SK-N-SH (cell line): ENCODE measurements at regions of chr2 and their contacts with region 1.

Region 1: GRCh38 chr2:120343433-120344105 is 2.4 kb upstream of the INHBB start:
- DNase-seq: peak; percentile 92
- H3K4me3 ChIP-seq: peak overlapping the region in 1 of 2 experiments; percentile 46; a peak in 2 of 4 replicates
- H3K27ac ChIP-seq: no peak overlapping the region
- H3K4me1 ChIP-seq: peaks cover 0 to 14% of the 10 kb centered on the region in 2 experiments; a peak in 1 of 4 replicates
- H3K27me3 ChIP-seq: peaks cover 64% of the 10 kb centered on the region
- CTCF ChIP-seq: peak; percentile 70
- EP300 ChIP-seq: no peak
- RAD21 ChIP-seq: peak; percentile 88

Region 2: DNA sequence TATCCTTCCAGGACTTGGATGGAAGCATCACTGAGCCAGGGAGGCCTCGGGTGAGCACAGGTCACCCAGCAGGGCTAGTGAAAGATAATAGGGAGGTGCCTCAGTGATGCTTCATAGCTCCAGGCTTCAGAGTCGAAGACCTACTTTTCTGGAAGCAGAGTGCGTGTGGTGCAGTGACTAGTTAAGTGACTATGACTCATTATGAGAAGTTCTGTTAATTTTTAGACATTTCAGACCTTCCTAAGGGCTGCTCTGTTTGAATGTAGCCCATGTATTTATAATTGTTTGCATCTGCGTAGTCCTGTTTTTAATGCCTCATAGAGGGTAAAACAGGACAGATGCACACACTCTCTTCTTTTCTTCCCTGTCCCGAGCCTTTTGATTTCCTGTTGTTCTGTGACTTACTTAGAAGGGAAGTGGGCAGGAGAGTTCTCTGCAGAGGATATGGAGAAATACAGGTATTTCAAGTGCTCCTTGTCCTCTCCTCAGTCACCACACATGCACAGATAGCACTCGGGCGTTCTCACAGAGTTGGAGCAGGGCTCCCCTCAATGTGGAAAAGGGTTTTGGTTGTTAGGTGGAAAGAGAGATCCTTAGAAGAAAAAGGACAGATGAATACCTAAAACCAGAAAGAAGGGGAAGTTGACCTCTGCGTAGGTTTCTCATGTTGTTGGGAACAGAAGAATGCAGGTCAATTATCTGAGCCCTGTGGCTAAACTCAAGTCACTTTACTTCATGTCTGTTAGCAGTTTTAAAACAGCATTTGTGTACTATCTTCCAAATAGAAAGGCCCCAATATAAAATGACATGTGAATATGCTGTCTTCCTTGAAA is 56.2 kb before region 1 on chr2:
- CTCF ChIA-PET with region 1: no interaction called
- POLR2A ChIA-PET with region 1: no interaction called
- DNase-seq: no peak
- H3K4me3 ChIP-seq: no peak overlapping the region
- H3K27ac ChIP-seq: peak overlapping the region in 1 of 2 experiments; percentile 61; a peak in 3 of 4 replicates
- H3K4me1 ChIP-seq: peaks cover 8 to 18% of the 10 kb centered on the region in 2 experiments; a peak in 3 of 4 replicates
- H3K27me3 ChIP-seq: no peaks in the 10 kb centered on the region
- CTCF ChIP-seq: no peak
- EP300 ChIP-seq: no peak
- RAD21 ChIP-seq: no peak

Region 3: DNA sequence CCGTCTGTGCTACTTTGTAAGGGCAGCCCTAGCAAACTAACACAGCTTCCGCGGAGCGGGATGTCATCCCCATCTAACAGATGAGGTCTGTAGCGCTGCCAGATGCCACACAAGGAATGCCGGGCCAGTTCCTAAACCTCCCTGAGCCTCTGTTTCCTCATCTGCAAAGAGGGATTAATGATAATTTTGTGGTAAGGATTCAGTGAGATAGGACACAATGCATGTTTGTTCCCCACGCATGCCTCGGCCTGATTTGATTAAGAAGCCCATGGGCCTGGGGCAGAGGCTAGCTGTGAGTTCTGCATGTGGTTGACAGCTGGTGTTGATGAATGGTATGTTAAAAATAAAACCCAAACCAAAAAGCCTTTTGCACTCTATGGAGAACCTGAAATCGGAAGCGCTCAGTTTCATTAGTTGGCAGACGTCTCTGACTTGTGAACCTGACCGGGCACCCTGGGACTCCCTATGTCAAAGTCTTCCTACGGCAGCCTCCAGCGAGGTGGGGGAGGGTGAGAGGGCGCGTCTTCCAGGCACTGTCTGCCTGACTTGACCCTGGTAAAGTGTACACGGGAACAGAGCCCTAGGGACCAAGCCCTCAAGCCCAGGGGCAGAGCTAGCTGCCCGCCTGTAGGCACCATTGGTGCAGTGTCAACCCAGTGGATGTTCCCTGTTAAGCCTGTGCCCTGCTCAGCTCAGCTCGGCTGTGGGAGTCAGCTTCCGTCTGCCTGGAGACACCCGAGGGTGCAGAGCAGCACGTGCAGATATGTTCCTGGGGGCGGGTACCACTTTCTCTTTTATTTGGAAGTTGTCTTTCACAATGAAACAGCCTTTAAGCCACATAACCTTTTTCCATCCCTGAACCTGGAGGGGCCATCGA is 12.4 kb before region 1 on chr2:
- CTCF ChIA-PET with region 1: interaction called, 41 read pairs
- POLR2A ChIA-PET with region 1: no interaction called
- DNase-seq: no peak
- H3K4me3 ChIP-seq: no peak overlapping the region
- H3K27ac ChIP-seq: no peak overlapping the region
- H3K4me1 ChIP-seq: peaks cover 0 to 10% of the 10 kb centered on the region in 2 experiments; a peak in 1 of 4 replicates
- H3K27me3 ChIP-seq: peaks cover 27% of the 10 kb centered on the region; the same call in 1 of the 2 replicates
- CTCF ChIP-seq: no peak
- EP300 ChIP-seq: no peak
- RAD21 ChIP-seq: no peak

Region 4: GRCh38 chr2:120453635-120453998 is 110.0 kb after region 1 on chr2:
- CTCF ChIA-PET with region 1: no interaction called
- POLR2A ChIA-PET with region 1: no interaction called
- DNase-seq: no peak
- H3K4me3 ChIP-seq: no peak overlapping the region
- H3K27ac ChIP-seq: no peak overlapping the region
- H3K4me1 ChIP-seq: 0 out of 4 replicates have a peak, but pooled peaks cover 0 to 5% of the 10 kb centered on the region in 2 experiments
- H3K27me3 ChIP-seq: no peaks in the 10 kb centered on the region
- CTCF ChIP-seq: no peak
- EP300 ChIP-seq: no peak
- RAD21 ChIP-seq: no peak

Region 5: DNA sequence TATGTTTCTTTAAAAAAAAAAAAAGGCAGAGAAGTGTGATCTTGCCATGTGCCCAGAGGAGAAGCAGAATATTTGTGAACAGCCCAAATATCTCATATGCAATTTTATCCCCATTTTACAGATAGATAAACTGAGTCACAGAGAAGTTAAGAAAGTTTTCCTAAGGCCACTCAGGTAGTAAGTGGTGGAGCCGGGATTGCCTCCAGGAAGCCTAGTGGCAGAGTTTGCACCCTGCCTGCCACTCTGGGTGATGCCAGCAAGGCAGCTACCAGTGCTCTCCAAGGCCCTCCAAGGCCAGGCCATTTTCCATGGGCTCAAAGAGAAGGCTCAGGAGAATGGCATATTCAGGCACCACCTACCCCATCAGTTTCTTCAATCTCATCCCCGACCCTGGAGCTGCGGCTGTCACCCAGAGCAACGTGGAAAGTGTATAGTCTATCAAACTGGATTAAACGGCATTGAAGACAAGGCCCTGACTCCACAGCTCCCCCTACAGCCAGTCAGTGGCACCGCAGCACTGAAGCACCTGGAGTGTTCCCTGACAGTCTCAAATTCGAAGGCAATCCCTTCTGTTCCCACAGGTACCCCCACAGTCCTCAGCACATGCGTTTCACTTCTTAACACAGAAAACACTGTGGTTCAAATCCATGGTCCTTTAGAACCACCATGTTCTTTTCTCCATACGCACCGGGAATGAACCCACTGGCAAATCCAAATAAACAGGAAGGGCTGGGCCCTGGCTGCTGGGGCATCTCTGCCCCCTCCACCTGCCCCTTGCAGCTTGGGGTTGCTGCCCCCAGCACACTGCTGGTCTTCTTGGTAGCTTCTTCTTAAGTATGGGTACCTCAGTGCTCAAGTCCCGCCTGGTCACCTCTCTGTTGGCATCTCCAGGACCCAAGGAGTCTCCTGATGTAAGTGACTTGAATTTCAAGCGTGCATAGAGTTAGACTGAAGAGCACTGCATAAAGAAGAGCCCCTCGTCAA is 177.7 kb after region 1 on chr2:
- CTCF ChIA-PET with region 1: interaction called, 10 read pairs
- POLR2A ChIA-PET with region 1: no interaction called
- DNase-seq: peak; percentile 65
- H3K4me3 ChIP-seq: no peak overlapping the region; a peak in 1 of 4 replicates
- H3K27ac ChIP-seq: no peak overlapping the region
- H3K4me1 ChIP-seq: no peaks in the 10 kb centered on the region; a peak in 1 of 4 replicates
- H3K27me3 ChIP-seq: peaks cover 40% of the 10 kb centered on the region
- CTCF ChIP-seq: peak; percentile 73
- EP300 ChIP-seq: no peak
- RAD21 ChIP-seq: peak; percentile 58

Region 6: GRCh38 chr2:120669121-120669952 is 325.8 kb after region 1 on chr2:
- CTCF ChIA-PET with region 1: interaction called, 29 read pairs
- POLR2A ChIA-PET with region 1: no interaction called
- DNase-seq: peak; percentile 75
- H3K4me3 ChIP-seq: peak overlapping the region in 1 of 2 experiments; percentile 6; a peak in 1 of 4 replicates
- H3K27ac ChIP-seq: no peak overlapping the region
- H3K4me1 ChIP-seq: peaks cover 0 to 12% of the 10 kb centered on the region in 2 experiments; a peak in 1 of 4 replicates
- H3K27me3 ChIP-seq: no peaks in the 10 kb centered on the region; the same call in 1 of the 2 replicates
- CTCF ChIP-seq: no peak
- EP300 ChIP-seq: no peak
- RAD21 ChIP-seq: no peak

Region 7: DNA sequence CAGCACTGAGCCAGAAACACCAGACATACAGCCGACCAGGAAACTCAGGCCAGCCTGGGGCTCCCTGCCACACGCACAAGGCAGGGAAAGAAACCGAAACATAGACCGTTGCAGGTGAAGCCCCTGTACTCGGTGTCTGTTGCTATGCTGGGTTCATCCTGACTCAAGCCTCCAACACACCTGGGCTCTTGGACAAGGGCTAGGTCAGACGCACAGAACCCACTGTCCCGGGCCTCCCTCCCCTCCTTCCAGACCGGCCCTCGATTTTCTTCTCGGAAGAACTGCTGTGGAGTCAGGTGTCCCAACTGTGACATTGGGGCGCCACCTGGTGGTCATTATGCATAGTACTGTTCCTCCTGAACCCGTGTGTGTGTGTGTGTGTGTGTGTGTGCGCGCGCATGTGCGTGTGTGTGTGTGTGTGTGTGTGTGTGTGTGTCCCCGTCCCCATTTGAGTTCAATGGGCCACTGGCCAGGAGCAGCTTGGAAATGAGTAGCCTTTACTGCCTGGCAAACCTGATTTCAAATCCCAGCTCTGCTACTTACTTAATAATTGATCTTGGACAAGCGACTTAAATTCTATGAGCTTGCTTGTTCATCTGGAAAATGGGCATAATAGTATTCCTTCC is 336.7 kb after region 1 on chr2:
- CTCF ChIA-PET with region 1: interaction called, 167 read pairs
- POLR2A ChIA-PET with region 1: interaction called, 3 read pairs
- DNase-seq: peak; percentile 83
- H3K4me3 ChIP-seq: peak overlapping the region in 1 of 2 experiments; percentile 24; a peak in 1 of 4 replicates
- H3K27ac ChIP-seq: no peak overlapping the region
- H3K4me1 ChIP-seq: peaks cover 0 to 10% of the 10 kb centered on the region in 2 experiments; a peak in 2 of 4 replicates
- H3K27me3 ChIP-seq: peaks cover 14% of the 10 kb centered on the region; the same call in 1 of the 2 replicates
- CTCF ChIP-seq: peak; percentile 58
- EP300 ChIP-seq: no peak
- RAD21 ChIP-seq: peak; percentile 86